IMR-90 (cell line): ENCODE measurements at regions of chr16 and their contacts with region 1.

Region 1: GRCh38 chr16:4116337-4117249 is at the start of gene ADCY9:
- DNase-seq: peak; percentile 73
- ATAC-seq: peak; percentile 86
- H3K4me3 ChIP-seq: peak within 1 kb of the TSS; percentile 66
- H3K27ac ChIP-seq: peak within 1 kb of the TSS; percentile 69
- H3K4me1 ChIP-seq: peaks cover 21% of the 10 kb centered on the region
- H3K27me3 ChIP-seq: no peaks in the 10 kb centered on the region
- CTCF ChIP-seq: 0 out of 2 replicates have a peak, but pooled peaks have one; percentile 10
- POLR2A ChIP-seq: 0 out of 2 replicates have a peak, but pooled peaks have one; percentile 32
- RAD21 ChIP-seq: no peak; the same call in 1 of the 2 replicates
- total RNA-seq, gene ADCY9: 5.4 and 5.6 TPM in 2 replicates

Region 2: DNA sequence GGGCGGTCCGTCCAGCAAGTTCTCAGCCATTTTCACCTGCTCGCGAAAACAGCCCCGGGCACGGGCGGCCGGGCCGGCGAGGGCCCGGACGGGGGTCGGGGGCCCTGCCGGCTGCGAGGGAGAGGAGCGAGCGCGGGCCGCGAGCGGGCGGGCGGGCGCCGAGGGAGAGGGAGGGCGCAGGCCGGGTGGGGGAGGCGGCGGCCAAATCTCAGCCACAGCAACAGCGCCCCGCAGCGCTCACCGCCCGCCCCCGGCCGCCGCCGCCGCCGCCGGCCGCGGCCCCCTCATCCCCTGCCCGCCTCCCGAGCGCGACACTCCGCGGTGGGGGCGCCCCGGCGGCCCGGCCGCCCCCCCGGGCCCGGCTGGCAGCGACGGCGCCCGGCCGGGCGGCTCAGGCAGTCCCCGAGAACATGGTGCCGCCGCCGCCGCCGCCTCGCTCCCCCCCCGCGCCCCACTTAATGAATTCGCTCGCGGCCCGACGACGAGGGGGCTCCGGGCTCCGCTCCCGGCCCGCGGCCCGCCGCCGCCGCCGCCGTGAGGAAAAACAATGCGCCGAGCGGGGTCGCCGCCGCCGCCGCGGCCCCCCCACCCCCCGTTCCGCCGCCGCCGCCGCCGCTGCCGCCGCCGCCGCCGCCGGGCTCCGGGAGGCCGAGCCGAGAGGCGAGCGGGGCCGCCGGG is 236.6 kb before region 1 on chr16:
- CTCF ChIA-PET with region 1: no interaction called
- POLR2A ChIA-PET with region 1: no interaction called
- dilution Hi-C with region 1: no loop called
- in situ Hi-C with region 1: no loop called
- intact Hi-C with region 1: loop called (anchors 5 kb)
- DNase-seq: peak; percentile 52
- ATAC-seq: peak; percentile 73
- H3K4me3 ChIP-seq: peak overlapping the region; percentile 76
- H3K27ac ChIP-seq: peak overlapping the region; percentile 66; the same call in 1 of the 2 replicates
- H3K4me1 ChIP-seq: peaks cover 18% of the 10 kb centered on the region
- H3K27me3 ChIP-seq: no peaks in the 10 kb centered on the region
- CTCF ChIP-seq: peak; percentile 49
- POLR2A ChIP-seq: no peak
- RAD21 ChIP-seq: peak; percentile 46

Region 3: DNA sequence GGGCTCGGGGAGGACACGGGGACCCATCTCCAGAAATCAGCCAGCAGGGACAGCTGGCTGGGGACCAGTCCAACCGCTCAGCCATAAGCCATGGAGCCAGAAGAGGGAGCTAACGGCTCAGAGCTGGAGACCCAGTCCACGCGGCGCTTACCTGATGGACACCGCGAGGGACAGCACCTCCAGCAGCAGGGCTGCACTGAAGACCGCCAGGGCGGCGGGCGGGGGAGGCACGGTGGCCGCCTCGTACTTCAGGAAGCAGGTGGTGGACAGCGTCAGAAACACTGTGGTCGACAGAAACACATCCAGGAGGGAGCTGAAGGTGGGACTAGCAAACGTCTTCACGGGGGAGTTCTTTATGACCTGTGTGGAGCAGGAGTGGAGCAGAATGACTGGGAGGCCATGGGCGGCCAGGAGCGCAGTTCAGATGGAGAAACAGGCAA is 133.5 kb before region 1 on chr16:
- CTCF ChIA-PET with region 1: interaction called, 4 read pairs
- POLR2A ChIA-PET with region 1: no interaction called
- dilution Hi-C with region 1: no loop called
- in situ Hi-C with region 1: no loop called
- intact Hi-C with region 1: loop called (anchors 1 kb)
- DNase-seq: peak; percentile 69
- ATAC-seq: peak; percentile 64
- H3K4me3 ChIP-seq: no peak overlapping the region
- H3K27ac ChIP-seq: no peak overlapping the region
- H3K4me1 ChIP-seq: peaks cover 13% of the 10 kb centered on the region
- H3K27me3 ChIP-seq: no peaks in the 10 kb centered on the region
- CTCF ChIP-seq: peak; percentile 80
- POLR2A ChIP-seq: no peak
- RAD21 ChIP-seq: peak; percentile 92

Region 4: DNA sequence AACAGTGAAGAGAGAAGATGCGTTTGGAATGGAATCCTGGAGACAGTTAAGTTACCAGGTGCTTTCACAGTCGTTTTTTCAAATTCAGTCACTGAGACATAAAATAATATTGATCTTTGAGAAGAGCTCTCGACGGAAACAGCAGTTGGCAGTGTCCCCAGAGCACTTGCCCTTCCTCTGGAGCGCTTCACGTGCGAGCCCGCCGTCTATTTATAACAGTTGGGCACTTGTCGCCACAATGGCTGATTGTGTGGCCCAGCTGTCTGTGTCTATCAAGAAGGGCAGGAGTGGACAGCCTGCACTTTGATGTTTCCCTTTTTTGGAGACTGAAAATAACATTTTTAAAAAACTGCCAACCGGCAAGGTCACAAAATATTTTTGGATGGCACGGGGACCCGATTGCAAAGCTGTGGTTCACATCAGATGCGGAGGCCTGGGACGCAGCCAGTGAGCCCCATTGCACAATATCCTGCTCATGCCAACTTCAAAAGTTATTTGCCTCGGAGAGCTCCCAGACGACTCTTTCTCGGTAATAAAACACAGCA is 63.2 kb before region 1 on chr16:
- CTCF ChIA-PET with region 1: no interaction called
- POLR2A ChIA-PET with region 1: no interaction called
- dilution Hi-C with region 1: no loop called
- in situ Hi-C with region 1: no loop called
- intact Hi-C with region 1: loop called (anchors 5 kb)
- DNase-seq: no peak
- ATAC-seq: peak; percentile 12
- H3K4me3 ChIP-seq: peak overlapping the region; percentile 1; the same call in 1 of the 2 replicates
- H3K27ac ChIP-seq: peak overlapping the region; percentile 85
- H3K4me1 ChIP-seq: peaks cover 17% of the 10 kb centered on the region
- H3K27me3 ChIP-seq: no peaks in the 10 kb centered on the region
- CTCF ChIP-seq: no peak
- POLR2A ChIP-seq: no peak
- RAD21 ChIP-seq: no peak

Region 5: GRCh38 chr16:4183237-4184036 is 66.8 kb after region 1 on chr16:
- CTCF ChIA-PET with region 1: no interaction called
- POLR2A ChIA-PET with region 1: no interaction called
- dilution Hi-C with region 1: no loop called
- in situ Hi-C with region 1: no loop called
- intact Hi-C with region 1: loop called (anchors 2 kb)
- DNase-seq: peak; percentile 92
- ATAC-seq: peak; percentile 98
- H3K4me3 ChIP-seq: peak overlapping the region; percentile 69
- H3K27ac ChIP-seq: peak overlapping the region; percentile 88
- H3K4me1 ChIP-seq: peaks cover 8% of the 10 kb centered on the region
- H3K27me3 ChIP-seq: no peaks in the 10 kb centered on the region
- CTCF ChIP-seq: no peak
- POLR2A ChIP-seq: peak; percentile 50; the same call in 1 of the 2 replicates
- RAD21 ChIP-seq: peak; percentile 16; the same call in 1 of the 2 replicates

Region 6: GRCh38 chr16:4330277-4330874 is 213.8 kb after region 1 on chr16:
- CTCF ChIA-PET with region 1: no interaction called
- POLR2A ChIA-PET with region 1: no interaction called
- dilution Hi-C with region 1: no loop called
- in situ Hi-C with region 1: no loop called
- intact Hi-C with region 1: loop called (anchors 5 kb)
- DNase-seq: peak; percentile 63
- ATAC-seq: peak; percentile 79
- H3K4me3 ChIP-seq: no peak overlapping the region
- H3K27ac ChIP-seq: no peak overlapping the region
- H3K4me1 ChIP-seq: peaks cover 20% of the 10 kb centered on the region
- H3K27me3 ChIP-seq: no peaks in the 10 kb centered on the region
- CTCF ChIP-seq: peak; percentile 96
- POLR2A ChIP-seq: no peak
- RAD21 ChIP-seq: peak; percentile 97